Sigmoid colon (tissue), 7 donors: ENCODE measurements at regions of chr3 and their contacts with region 1.

Region 1: GRCh38 chr3:197456261-197457091 is 99.3 kb downstream of the BDH1 start:
- DNase-seq: peak; percentile 95
- H3K4me3 ChIP-seq: peak overlapping the region; percentile 43 to 59 (median 50)
- H3K27ac ChIP-seq: peak overlapping the region; percentile 50 to 79 (median 63)
- H3K4me1 ChIP-seq: peaks cover 0 to 11% (median 4%) of the 10 kb centered on the region in 4 donors
- H3K27me3 ChIP-seq: no peaks in the 10 kb centered on the region
- CTCF ChIP-seq: no peak
- EP300 ChIP-seq: no peak
- POLR2A ChIP-seq: no peak

Region 2: GRCh38 chr3:195850857-195851543 is 1605.5 kb before region 1 on chr3:
- intact Hi-C with region 1: no loop called
- DNase-seq: peak; percentile 94
- H3K4me3 ChIP-seq: no peak overlapping the region
- H3K27ac ChIP-seq: no peak overlapping the region
- H3K4me1 ChIP-seq: peaks cover 0 to 6% (median 0%) of the 10 kb centered on the region in 4 donors
- H3K27me3 ChIP-seq: no peaks in the 10 kb centered on the region
- CTCF ChIP-seq: peak; percentile 100
- EP300 ChIP-seq: no peak
- POLR2A ChIP-seq: no peak

Region 3: DNA sequence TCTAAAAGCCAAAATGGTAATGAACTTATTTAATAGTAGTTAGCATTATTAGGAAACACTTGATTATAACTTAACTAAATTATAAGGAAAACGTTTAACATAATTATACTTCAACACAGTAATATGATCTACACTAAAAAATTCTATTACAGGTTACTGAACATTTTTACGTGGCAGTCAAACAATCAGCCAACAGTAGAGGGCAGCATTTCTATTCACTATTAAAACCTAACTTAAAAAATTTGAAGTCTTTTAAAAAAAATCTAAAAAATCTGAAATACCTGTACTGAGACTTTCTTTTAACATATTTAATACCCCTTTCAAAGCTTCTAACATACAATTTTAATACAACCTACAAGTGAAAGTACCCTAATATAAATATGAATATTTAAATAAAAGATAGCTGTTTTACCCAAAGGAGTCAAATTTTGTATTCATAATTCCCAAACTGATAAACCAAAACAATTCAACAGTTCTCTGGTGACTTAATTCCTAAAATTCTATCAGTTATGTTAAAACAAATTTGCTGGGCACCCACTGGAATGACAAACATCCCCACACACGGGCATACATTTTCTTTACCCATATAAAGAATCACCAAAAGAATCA is 199.5 kb before region 1 on chr3:
- intact Hi-C with region 1: loop called (anchors 5 kb)
- DNase-seq: no peak
- H3K4me3 ChIP-seq: no peak overlapping the region
- H3K27ac ChIP-seq: peak overlapping the region in 1 of 4 donors; percentile 3
- H3K4me1 ChIP-seq: peaks cover 0 to 10% (median 3%) of the 10 kb centered on the region in 4 donors
- H3K27me3 ChIP-seq: no peaks in the 10 kb centered on the region
- CTCF ChIP-seq: peak in 3 of 4 experiments; percentile 41 to 61 (median 50)
- EP300 ChIP-seq: no peak
- POLR2A ChIP-seq: no peak

Region 4: DNA sequence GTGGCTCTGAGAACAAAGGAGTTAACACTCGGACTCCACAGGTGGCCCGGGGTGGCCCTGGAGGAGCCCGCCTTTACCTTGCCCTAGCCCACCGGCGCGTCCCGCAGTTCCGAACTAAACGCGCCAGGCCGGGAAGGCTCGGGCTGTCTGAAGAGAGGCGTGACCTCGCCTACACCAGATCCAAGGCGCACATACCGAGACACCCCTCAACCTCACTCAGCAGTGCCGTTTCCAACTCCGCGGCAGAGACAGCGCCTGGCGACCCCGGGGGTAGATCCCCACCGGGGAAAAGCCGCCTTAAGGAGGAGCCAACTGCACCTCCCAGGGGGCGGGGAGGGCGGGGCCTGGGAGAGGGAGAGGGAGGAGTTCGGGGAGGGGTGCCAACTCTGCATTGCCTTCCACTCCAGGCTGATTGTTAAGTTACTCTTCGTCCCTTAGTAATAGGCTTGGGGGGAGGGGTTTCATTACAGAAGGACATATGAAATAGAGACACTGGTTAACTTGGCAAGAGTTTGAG is 158.1 kb before region 1 on chr3 and contains the start of gene DLG1:
- intact Hi-C with region 1: loop called (anchors 2 kb)
- DNase-seq: peak; percentile 93
- H3K4me3 ChIP-seq: peak within 1 kb of the TSS; percentile 74 to 95 (median 92)
- H3K27ac ChIP-seq: peak within 1 kb of the TSS; percentile 88 to 95 (median 93)
- H3K4me1 ChIP-seq: peaks cover 0 to 34% (median 21%) of the 10 kb centered on the region in 4 donors
- H3K27me3 ChIP-seq: no peaks in the 10 kb centered on the region
- CTCF ChIP-seq: no peak
- EP300 ChIP-seq: no peak
- POLR2A ChIP-seq: peak; percentile 38 to 69
- total RNA-seq, gene DLG1: 62.6 to 71.0 (median 66.9) TPM

Region 5: DNA sequence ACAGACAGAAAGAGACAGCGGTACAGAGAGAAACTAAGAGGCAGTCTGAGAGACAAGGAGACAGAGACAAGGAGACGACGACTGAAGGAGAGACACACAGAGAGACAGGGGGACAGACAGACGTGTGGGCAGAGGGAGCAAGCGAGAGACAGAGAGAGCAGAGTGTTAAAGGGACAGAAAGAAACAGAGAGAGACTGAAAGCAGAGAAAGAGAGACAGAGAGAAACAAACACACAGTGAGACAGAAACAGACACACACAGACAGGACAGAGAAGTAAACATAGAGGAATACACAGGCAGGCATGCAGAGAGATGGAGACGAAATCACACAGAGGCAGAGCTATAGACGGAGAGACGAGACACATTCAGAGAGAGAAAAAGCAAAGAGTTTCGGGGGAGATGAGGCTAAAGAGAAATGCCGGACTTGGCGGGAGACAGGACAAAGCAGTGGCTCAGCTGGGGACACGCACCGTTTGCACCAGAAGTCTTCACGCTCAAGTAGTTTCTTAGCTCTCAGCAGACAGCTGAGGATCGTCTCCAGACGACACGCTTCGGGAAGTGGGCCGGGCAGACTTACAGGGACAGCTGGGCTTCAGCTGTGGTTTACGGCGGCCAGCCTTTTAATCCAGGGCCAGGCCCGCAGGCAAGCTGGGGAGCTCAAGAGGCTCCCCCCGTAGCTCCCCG is 102.0 kb before region 1 on chr3:
- intact Hi-C with region 1: loop called (anchors 10 kb)
- DNase-seq: peak; percentile 88
- H3K4me3 ChIP-seq: peak overlapping the region in 3 of 4 donors; percentile 4 to 26 (median 13)
- H3K27ac ChIP-seq: peak overlapping the region in 3 of 4 donors; percentile 42 to 75 (median 71)
- H3K4me1 ChIP-seq: peaks cover 0 to 42% (median 37%) of the 10 kb centered on the region in 4 donors
- H3K27me3 ChIP-seq: no peaks in the 10 kb centered on the region
- CTCF ChIP-seq: no peak
- EP300 ChIP-seq: no peak
- POLR2A ChIP-seq: no peak

Region 6: DNA sequence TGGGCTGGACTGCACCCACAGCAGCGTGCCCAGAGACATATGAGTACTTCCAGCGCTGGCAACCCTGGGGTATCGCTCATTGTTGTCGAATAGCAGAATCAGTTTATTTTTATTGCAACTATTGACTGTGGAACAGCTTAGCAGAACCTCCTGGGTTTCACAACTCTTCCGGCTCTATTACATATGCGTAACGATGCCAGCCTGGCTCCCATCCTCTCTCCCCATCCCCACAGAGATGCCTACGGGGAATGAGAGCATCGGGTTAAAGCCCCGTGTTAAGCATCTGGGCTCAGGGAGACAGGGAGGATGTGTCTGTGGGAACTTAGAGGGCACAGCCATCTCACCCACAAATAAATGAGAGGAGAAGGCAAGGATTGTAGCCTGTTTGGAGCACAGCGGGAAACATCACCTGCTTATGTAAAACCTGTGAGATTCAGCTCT is 81.5 kb before region 1 on chr3:
- intact Hi-C with region 1: loop called (anchors 5 kb)
- DNase-seq: peak; percentile 20
- H3K4me3 ChIP-seq: no peak overlapping the region
- H3K27ac ChIP-seq: no peak overlapping the region
- H3K4me1 ChIP-seq: peaks cover 0 to 16% (median 14%) of the 10 kb centered on the region in 4 donors
- H3K27me3 ChIP-seq: no peaks in the 10 kb centered on the region
- CTCF ChIP-seq: no peak
- EP300 ChIP-seq: no peak
- POLR2A ChIP-seq: no peak